GM12878 (cell line): ENCODE measurements at regions of chr16 and their contacts with region 1.

Region 1: DNA sequence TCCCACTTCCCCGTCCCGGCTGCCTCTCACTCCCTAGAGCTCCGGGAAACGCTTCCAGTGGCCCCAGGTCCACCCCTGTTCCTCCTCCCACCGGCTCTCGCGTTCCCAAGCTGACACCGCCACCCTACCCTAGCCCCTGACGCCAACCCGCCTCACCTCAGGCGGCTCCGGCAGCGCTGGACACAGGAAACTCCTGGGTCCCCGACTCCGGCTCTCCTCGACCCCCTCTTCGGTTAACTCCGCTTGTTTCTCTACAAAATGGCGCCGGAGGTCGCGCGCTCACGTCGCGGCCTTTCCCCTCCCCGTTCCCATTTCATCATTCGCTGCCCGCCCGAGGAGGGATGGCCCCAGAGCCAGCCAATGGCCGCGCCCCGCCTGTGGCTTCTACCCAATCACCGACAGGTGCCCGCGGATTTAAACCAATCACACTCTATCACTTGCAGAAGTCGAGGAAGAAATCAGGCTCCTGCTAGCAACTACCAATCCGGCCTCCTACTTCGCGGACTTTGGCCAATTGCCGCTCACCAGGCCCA is at the start of gene CNOT1:
- DNase-seq: peak; percentile 97
- ATAC-seq: peak; percentile 89
- H3K4me3 ChIP-seq: peak within 1 kb of the TSS; percentile 85
- H3K27ac ChIP-seq: peak within 1 kb of the TSS; percentile 96
- H3K4me1 ChIP-seq: no peaks in the 10 kb centered on the region; the same call in 1 of the 2 replicates
- H3K27me3 ChIP-seq: no peaks in the 10 kb centered on the region
- CTCF ChIP-seq: no peak
- EP300 ChIP-seq: no peak
- POLR2A ChIP-seq: peak; percentile 88
- RAD21 ChIP-seq: no peak
- polyA plus RNA-seq, gene CNOT1: 101 to 131 TPM

Region 2: DNA sequence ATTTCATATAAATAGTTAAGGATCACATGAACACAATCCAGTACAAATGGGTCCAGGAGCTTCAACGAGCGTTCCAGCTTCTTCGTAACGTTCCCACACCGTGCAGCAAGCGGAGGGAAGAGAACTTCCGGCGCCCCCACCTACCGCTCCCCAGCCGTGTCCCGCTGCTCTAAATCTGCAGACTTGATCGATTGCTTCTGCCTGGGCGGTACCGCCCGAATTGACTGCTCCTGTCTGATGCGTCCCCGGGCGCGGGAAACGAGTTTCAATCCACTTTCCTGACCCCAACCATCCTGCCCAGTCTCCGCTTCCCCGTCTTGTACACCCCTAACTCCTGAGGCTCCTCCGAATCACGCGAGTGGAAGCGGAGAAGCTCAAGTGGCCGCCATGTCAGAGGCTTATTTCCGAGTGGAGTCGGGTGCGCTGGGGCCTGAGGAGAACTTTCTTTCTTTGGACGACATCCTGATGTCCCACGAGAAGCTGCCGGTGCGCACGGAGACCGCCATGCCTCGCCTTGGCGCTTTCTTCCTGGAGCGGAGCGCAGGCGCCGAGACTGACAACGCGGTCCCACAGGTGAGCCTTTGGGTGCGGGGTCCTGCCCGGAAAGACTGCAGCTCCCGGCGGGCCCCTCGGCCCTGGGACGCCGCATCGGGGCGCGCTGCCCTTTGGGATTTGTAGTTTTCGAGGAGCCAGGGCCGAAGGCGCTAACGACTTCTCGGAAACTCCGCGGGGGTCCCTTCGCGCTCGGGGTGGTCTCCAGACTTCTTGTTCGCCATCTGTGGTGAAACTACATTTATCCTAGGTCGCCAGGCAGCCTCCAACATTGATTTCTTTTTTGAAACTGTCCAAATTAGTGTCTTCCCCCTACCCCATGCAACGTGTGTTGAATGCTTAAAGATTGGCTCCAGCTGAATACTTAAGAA is 237.2 kb before region 1 on chr16 and contains the start of gene GINS3:
- CTCF ChIA-PET with region 1: no interaction called
- POLR2A ChIA-PET with region 1: no interaction called
- RAD21 ChIA-PET with region 1: no interaction called
- SMC1A ChIA-PET with region 1: no interaction called
- in situ Hi-C with region 1: loop called (anchors 10 kb)
- intact Hi-C with region 1: loop called (anchors 5 kb)
- DNase-seq: peak; percentile 48
- ATAC-seq: peak; percentile 99
- H3K4me3 ChIP-seq: peak within 1 kb of the TSS; percentile 99
- H3K27ac ChIP-seq: peak within 1 kb of the TSS; percentile 83
- H3K4me1 ChIP-seq: no peaks in the 10 kb centered on the region
- H3K27me3 ChIP-seq: no peaks in the 10 kb centered on the region
- CTCF ChIP-seq: no peak
- EP300 ChIP-seq: no peak
- POLR2A ChIP-seq: peak; percentile 90
- RAD21 ChIP-seq: no peak
- polyA plus RNA-seq, gene GINS3: 13.6 to 14.5 TPM

Region 3: DNA sequence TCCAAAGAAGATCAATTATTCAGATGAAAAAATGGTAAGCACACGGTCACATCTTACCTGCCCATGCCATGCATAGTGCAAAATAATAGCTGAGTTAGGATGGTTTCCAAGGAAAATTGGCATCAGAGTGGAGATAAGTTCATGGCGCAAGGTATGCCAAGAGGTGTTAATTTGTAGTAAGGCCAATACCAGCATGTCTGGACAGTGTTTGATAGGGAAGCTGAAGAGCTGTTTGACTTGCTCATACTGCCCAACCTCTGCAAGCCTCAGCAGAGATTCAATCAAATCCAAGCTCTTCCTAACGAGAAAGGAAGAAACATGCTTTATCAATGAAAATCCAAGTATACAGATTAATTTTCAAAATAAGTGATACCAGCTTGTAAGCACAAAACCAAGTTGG is 51.0 kb before region 1 on chr16:
- CTCF ChIA-PET with region 1: no interaction called
- POLR2A ChIA-PET with region 1: no interaction called
- RAD21 ChIA-PET with region 1: no interaction called
- SMC1A ChIA-PET with region 1: no interaction called
- in situ Hi-C with region 1: no loop called
- intact Hi-C with region 1: no loop called
- DNase-seq: no peak
- ATAC-seq: no peak
- H3K4me3 ChIP-seq: no peak overlapping the region
- H3K27ac ChIP-seq: no peak overlapping the region
- H3K4me1 ChIP-seq: no peaks in the 10 kb centered on the region
- H3K27me3 ChIP-seq: no peaks in the 10 kb centered on the region
- CTCF ChIP-seq: no peak
- EP300 ChIP-seq: no peak
- POLR2A ChIP-seq: no peak
- RAD21 ChIP-seq: no peak

Region 4: GRCh38 chr16:58733671-58734458 is 104.2 kb after region 1 on chr16 and contains the start of gene GOT2:
- CTCF ChIA-PET with region 1: no interaction called
- POLR2A ChIA-PET with region 1: no interaction called
- RAD21 ChIA-PET with region 1: interaction called, 3 read pairs
- SMC1A ChIA-PET with region 1: no interaction called
- in situ Hi-C with region 1: no loop called
- intact Hi-C with region 1: loop called (anchors 1 kb)
- DNase-seq: peak; percentile 43
- ATAC-seq: peak; percentile 95
- H3K4me3 ChIP-seq: peak within 1 kb of the TSS; percentile 89
- H3K27ac ChIP-seq: peak within 1 kb of the TSS; percentile 64
- H3K4me1 ChIP-seq: peaks cover 7% of the 10 kb centered on the region
- H3K27me3 ChIP-seq: no peaks in the 10 kb centered on the region; a peak in 1 of 4 replicates
- CTCF ChIP-seq: peak; percentile 96 to 98 (median 98); a peak in 5 of 6 replicates
- EP300 ChIP-seq: no peak
- POLR2A ChIP-seq: peak; percentile 88
- RAD21 ChIP-seq: peak; percentile 24; the same call in 1 of the 2 replicates
- polyA plus RNA-seq, gene GOT2: 79.4 to 81.0 TPM